Right cardiac atrium (tissue), 5 donors: ENCODE measurements at regions of chr9 and their contacts with region 1.

Region 1: DNA sequence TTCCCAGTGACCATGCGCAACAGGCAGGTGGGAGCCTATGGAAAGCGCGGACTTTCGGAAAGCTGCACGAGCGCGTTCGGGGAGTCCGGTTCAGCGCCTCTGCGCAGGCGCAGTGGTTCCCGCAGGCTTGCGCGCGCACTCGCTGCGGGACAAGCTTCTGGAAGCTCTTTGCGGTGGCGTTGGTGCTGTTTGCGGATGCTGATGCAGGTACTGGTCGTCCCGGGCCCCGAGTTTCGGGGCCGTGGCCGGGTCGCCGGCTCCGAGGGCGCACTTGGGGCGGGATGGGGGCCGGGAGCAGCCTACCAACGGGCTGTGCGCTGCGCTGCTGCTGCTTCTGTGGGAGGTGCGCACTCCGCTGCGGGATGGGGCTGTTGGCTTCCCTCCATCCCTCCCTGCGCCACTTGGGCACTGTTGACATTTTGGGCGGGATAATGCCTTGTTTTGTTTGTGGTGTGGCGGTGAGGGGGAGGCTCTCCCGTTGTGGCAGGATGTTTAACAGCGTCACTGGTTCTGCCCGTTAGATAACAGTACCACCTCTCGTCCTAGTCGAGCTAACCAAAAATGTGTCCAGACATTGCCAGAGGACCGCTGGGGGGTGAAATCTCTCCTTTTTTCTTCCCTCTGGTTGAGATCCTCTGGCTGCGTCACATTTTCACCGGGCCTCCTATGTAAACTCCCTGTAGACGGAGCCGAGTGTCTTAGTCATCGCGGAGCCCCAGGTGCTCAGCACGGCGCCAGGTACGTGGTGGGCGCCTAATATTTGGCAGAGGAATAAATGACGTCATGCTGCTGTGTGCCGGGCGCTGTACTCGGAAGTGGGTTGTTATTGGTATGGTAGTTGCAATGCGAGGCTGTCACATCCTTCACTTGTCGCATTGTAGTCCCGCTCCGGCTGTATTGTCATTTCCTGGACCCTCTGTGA is at the start of gene ZNF483:
- DNase-seq: peak; percentile 85 to 94 (median 94)
- ATAC-seq: peak; percentile 90 to 94
- H3K4me3 ChIP-seq: peak within 1 kb of the TSS; percentile 57
- H3K27ac ChIP-seq: no peak within 1 kb of the TSS
- H3K4me1 ChIP-seq: no peaks in the 10 kb centered on the region
- H3K27me3 ChIP-seq: no peaks in the 10 kb centered on the region
- total RNA-seq, gene ZNF483: 9.6 to 14.7 (median 10.7) TPM

Region 2: GRCh38 chr9:110958847-110959246 is 566.5 kb before region 1 on chr9:
- intact Hi-C with region 1: no loop called
- DNase-seq: no peak
- ATAC-seq: no peak
- H3K4me3 ChIP-seq: no peak overlapping the region
- H3K27ac ChIP-seq: no peak overlapping the region
- H3K4me1 ChIP-seq: no peaks in the 10 kb centered on the region
- H3K27me3 ChIP-seq: no peaks in the 10 kb centered on the region

Region 3: DNA sequence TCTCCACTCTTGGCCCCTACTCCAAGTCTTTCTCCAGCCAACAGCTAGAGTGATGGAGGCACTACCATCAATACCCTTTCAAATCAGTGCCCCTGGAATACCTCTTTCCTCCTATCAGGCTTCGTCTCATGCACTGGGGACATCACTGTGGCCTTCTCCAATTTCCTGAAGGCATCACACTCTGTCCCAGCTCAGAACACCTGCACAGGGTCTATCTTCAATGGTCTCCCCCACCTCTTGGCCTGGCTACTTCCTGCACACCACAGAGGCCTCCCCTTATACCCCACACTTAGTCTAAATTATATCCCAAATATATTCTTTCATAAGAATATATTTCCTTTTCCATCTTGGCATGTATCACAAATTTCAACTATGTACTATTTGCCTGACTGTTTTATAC is 75.6 kb before region 1 on chr9:
- intact Hi-C with region 1: loop called in 1 of 4 experiments (anchors 10 kb)
- DNase-seq: no peak
- ATAC-seq: peak; percentile 19 to 28
- H3K4me3 ChIP-seq: no peak overlapping the region
- H3K27ac ChIP-seq: no peak overlapping the region
- H3K4me1 ChIP-seq: peaks cover 2% of the 10 kb centered on the region
- H3K27me3 ChIP-seq: no peaks in the 10 kb centered on the region

Region 4: DNA sequence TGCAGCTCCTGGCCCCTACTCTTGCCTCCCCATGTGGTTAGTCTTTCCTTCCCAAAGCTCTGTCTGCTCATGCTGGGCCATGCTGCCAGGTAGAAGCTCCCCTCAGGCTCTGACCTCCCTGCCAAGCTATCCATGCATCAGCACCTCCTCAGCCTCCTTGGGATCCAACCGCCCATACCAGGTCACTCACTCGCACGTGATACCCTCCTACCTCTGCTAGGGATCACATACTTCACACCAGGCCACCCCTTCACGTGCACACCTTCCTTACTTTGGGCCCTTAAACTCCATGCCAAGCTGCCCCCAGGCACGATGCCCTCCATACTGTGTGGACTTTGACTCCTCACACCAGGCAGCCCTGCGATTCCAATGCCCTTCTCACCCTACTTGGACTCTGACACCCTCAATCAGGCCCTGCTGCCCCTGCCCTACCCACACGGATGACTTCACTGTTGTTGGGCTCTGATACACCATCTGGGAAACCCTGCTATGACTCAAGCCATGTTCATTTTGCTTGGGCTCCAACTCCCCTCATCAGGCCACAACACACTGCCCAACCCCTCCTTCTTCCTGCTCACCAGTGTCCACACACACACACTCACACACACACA is 33.8 kb after region 1 on chr9:
- intact Hi-C with region 1: no loop called
- DNase-seq: no peak
- ATAC-seq: peak in 1 of 2 donors; percentile 31
- H3K4me3 ChIP-seq: no peak overlapping the region
- H3K27ac ChIP-seq: no peak overlapping the region
- H3K4me1 ChIP-seq: no peaks in the 10 kb centered on the region
- H3K27me3 ChIP-seq: no peaks in the 10 kb centered on the region